K562 (cell line): ENCODE measurements at regions of chr9 and their contacts with region 1.

Region 1: GRCh38 chr9:125428060-125428901 is 166.7 kb downstream of the GAPVD1 start:
- DNase-seq: peak; percentile 85 to 92 (median 89)
- ATAC-seq: peak; percentile 96
- H3K4me3 ChIP-seq: no peak overlapping the region
- H3K27ac ChIP-seq: no peak overlapping the region
- H3K4me1 ChIP-seq: peaks cover 6 to 55% of the 10 kb centered on the region in 2 experiments; a peak in 3 of 5 replicates
- H3K27me3 ChIP-seq: no peaks in the 10 kb centered on the region
- CTCF ChIP-seq: peak; percentile 87 to 92 (median 91)
- EP300 ChIP-seq: no peak
- POLR2A ChIP-seq: 0 out of 2 replicates have a peak, but pooled peaks have one; percentile 17
- RAD21 ChIP-seq: peak; percentile 81 to 95

Region 2: DNA sequence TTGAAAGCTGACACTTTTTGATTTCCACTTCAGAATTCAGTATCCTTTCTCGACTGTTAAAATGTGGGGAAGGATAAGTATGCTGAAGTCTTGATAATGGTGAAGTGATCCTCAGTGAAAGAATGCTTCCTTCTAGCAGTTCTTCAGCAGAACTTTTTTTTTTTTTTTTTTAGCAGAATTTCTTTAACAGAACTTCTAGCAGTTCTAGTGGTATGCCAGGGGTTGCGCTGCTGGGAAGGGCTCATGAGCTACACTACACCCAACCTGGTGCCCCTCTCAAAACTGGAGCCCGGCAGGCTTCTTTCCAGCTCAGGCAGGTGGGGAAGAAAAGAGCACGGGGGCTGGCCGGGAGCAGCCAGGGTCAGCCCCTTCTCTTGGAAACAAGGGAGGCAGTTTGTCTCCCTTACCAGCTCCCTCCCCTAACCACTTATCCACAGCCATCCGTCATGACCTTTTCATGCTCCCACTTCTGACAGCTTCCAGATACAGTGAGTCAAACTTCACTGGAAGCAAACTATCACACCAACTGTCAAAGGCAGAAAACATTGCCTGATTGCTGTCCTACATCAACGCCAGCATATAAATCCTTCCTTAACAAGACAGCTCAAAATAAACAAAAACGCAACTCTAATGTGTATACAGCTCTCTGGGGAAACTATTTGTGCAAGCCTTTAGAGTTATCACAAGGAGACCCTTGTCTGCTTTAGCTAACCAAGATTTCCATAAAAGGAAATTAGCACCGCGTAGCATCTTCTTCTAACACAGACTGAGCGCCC is 44.8 kb after region 1 on chr9:
- CTCF ChIA-PET with region 1: no interaction called
- POLR2A ChIA-PET with region 1: no interaction called
- in situ Hi-C with region 1: no loop called
- intact Hi-C with region 1: loop called (anchors 5 kb)
- DNase-seq: peak; percentile 62 to 91 (median 76)
- ATAC-seq: peak; percentile 83
- H3K4me3 ChIP-seq: peak overlapping the region; percentile 15; the same call in 1 of the 2 replicates
- H3K27ac ChIP-seq: peak overlapping the region; percentile 80
- H3K4me1 ChIP-seq: peaks cover 32 to 67% of the 10 kb centered on the region in 2 experiments
- H3K27me3 ChIP-seq: no peaks in the 10 kb centered on the region
- CTCF ChIP-seq: 0 out of 6 replicates have a peak, but pooled peaks have one; percentile 3 to 22 (median 6)
- EP300 ChIP-seq: peak; percentile 94
- POLR2A ChIP-seq: no peak
- RAD21 ChIP-seq: peak in 1 of 2 experiments; percentile 19; a peak in 2 of 4 replicates

Region 3: GRCh38 chr9:125538092-125538473 is 109.8 kb after region 1 on chr9:
- CTCF ChIA-PET with region 1: interaction called, 3 read pairs
- POLR2A ChIA-PET with region 1: no interaction called
- in situ Hi-C with region 1: no loop called
- intact Hi-C with region 1: loop called (anchors 5 kb)
- DNase-seq: peak in 2 of 4 experiments; percentile 39 to 45
- ATAC-seq: peak; percentile 63
- H3K4me3 ChIP-seq: no peak overlapping the region
- H3K27ac ChIP-seq: no peak overlapping the region
- H3K4me1 ChIP-seq: peaks cover 0 to 17% of the 10 kb centered on the region in 2 experiments; a peak in 2 of 5 replicates
- H3K27me3 ChIP-seq: no peaks in the 10 kb centered on the region
- CTCF ChIP-seq: no peak
- EP300 ChIP-seq: peak; percentile 54; the same call in 1 of the 2 replicates
- POLR2A ChIP-seq: no peak
- RAD21 ChIP-seq: no peak